ENCODE measurements at regions of chr10 and their contacts with region 1.

Region 1: GRCh38 chr10:21732067-21732772 is 198.2 kb downstream of the MLLT10 start:
- DNase-seq: peak; percentile 59 to 79 (median 64)
- ATAC-seq: peak; percentile 87 to 96 (median 94)
- H3K4me3 ChIP-seq: no peak overlapping the region
- H3K27ac ChIP-seq: no peak overlapping the region
- H3K4me1 ChIP-seq: peaks cover 0 to 10% (median 4%) of the 10 kb centered on the region in 12 donors
- H3K27me3 ChIP-seq: no peaks in the 10 kb centered on the region
- CTCF ChIP-seq: peak; percentile 77 to 94 (median 88)
- POLR2A ChIP-seq: no peak

Region 2: DNA sequence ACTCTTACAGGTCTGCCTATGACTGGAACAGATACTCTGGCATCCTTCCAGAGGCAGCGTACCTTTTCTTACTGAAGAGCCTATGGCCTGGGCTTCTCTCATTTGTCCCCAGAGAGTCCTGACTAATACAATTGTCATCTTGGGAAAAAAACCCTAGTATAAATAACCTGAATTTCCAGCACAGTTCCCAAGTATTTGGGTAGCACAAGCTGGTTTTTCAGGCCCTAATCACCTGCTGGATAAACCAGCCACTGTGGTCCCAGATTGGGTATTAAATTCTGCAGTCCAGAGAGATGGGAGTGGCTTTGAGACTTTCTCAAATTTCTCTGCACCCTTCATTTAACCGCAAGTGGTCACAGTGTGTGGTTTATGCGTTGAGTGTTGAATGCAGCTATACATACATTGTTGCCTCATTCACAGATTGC is 648.3 kb before region 1 on chr10:
- intact Hi-C with region 1: loop called in 3 of 10 experiments (anchors 10 kb)
- DNase-seq: no peak
- ATAC-seq: no peak
- H3K4me3 ChIP-seq: no peak overlapping the region
- H3K27ac ChIP-seq: no peak overlapping the region
- H3K4me1 ChIP-seq: peaks cover 0 to 2% (median 0%) of the 10 kb centered on the region in 12 donors
- H3K27me3 ChIP-seq: no peaks in the 10 kb centered on the region
- CTCF ChIP-seq: no peak
- POLR2A ChIP-seq: no peak

Region 3: DNA sequence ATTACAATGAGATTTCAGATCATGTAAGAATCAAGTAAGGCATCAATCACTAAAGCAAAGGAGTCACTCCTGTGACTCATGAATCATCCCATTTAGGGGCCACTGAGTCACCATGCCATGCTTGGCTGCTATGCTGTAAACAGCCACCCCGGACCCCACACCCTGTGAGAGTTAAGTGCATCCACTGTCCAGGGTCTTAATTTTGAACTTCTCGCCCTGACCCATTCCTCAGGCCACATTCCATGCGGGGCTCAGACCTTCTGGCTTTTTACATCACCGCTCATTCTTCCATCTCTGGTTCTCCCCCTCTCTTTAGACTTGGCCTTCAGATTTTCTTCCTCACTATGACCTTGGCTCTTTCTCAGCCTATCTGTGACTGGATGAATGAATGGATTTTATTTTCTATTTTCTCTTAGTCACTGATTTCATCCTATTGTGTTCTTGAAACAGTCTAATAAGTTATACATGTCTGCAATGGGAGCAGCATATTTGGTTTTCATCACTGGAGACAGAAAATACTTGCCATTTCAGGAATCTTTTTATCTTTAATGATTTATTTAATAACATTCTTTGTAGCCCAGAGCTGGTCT is 446.4 kb before region 1 on chr10:
- intact Hi-C with region 1: loop called in 2 of 10 experiments (anchors 10 kb)
- DNase-seq: no peak
- ATAC-seq: no peak
- H3K4me3 ChIP-seq: no peak overlapping the region
- H3K27ac ChIP-seq: no peak overlapping the region
- H3K4me1 ChIP-seq: no peaks in the 10 kb centered on the region
- H3K27me3 ChIP-seq: no peaks in the 10 kb centered on the region
- CTCF ChIP-seq: no peak
- POLR2A ChIP-seq: no peak

Region 4: GRCh38 chr10:21533467-21534279 is 198.5 kb before region 1 on chr10 and contains the start of gene MLLT10:
- intact Hi-C with region 1: loop called in 4 of 10 experiments (anchors 5 to 10 kb)
- DNase-seq: peak; percentile 96 to 98 (median 97)
- ATAC-seq: peak; percentile 86 to 97 (median 94)
- H3K4me3 ChIP-seq: peak within 1 kb of the TSS; percentile 54 to 88 (median 78)
- H3K27ac ChIP-seq: peak within 1 kb of the TSS; percentile 89 to 99 (median 97)
- H3K4me1 ChIP-seq: peaks cover 0 to 31% (median 22%) of the 10 kb centered on the region in 12 donors
- H3K27me3 ChIP-seq: no peaks in the 10 kb centered on the region
- CTCF ChIP-seq: peak in 7 of 12 donors; percentile 17 to 44 (median 21)
- POLR2A ChIP-seq: peak in 1 of 2 donors; percentile 76
- total RNA-seq, gene MLLT10: 17.1 to 30.7 (median 25.2) TPM

Region 5: DNA sequence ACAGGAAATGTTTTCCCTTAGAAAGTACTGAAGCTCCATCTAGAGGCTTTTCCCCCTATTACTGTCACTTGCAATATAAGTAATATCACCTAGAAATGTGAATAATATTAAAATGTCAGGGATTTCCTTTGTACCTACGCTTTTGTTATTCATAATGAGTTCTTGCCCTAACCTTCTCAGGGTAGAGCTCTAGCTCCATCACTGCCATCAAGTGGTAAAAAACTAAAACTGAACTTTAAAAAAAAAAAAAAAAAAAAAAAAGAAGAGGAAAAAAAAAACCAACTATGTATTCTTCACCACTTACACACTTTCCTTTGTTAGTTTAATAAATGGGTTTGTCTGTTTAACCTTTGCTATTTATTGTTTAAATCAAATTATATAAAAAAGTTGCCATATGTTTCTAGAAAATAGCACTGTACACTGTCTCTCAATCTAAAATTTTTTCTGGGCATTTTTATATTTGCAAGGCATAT is 221.4 kb after region 1 on chr10:
- intact Hi-C with region 1: loop called in 3 of 10 experiments (anchors 10 kb)
- DNase-seq: no peak
- ATAC-seq: peak in 3 of 4 donors; percentile 42 to 69 (median 58)
- H3K4me3 ChIP-seq: no peak overlapping the region
- H3K27ac ChIP-seq: no peak overlapping the region
- H3K4me1 ChIP-seq: peaks cover 0 to 18% (median 3%) of the 10 kb centered on the region in 12 donors
- H3K27me3 ChIP-seq: no peaks in the 10 kb centered on the region
- CTCF ChIP-seq: peak; percentile 32 to 60 (median 40)
- POLR2A ChIP-seq: no peak

Region 6: GRCh38 chr10:21993360-21994001 is 261.3 kb after region 1 on chr10:
- intact Hi-C with region 1: no loop called
- DNase-seq: no peak
- ATAC-seq: no peak
- H3K4me3 ChIP-seq: no peak overlapping the region
- H3K27ac ChIP-seq: no peak overlapping the region
- H3K4me1 ChIP-seq: peaks cover 0 to 23% (median 2%) of the 10 kb centered on the region in 12 donors
- H3K27me3 ChIP-seq: no peaks in the 10 kb centered on the region
- CTCF ChIP-seq: peak; percentile 31 to 66 (median 54)
- POLR2A ChIP-seq: no peak